H1 (cell line): ENCODE measurements at regions of chr5 and their contacts with region 1.

Region 1: DNA sequence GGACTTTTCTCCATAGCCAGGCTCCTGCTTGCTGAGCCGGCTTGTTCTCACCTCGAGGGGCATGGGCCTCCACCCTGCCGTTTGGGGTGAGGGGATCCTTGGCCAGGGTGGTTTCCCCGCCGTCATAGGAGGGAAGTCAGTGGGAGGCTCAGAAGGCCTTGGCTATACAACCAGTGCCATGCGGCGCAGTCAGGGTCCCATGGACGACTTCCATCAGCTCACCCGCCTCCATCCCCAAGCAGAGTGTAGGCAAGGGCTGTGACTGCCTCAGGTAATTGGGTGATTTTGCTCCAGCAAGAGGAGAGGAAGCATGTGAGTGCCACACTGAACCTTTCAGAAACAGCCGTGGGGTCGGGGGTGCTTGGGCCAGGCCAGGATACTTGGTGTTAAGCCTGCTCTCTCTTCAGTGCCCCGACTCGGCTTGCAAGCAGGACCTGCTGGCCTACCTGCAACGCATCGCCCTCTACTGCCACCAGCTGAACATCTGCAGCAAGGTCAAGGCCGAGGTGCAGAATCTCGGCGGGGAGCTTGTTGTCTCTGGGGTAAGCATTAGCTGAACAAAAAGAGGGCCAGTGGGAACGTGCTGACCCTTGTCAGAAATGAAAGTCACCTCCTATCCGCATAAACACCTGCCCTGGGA is 57.2 kb upstream of the LRRTM2 start:
- DNase-seq: no peak
- H3K4me3 ChIP-seq: no peak overlapping the region
- H3K27ac ChIP-seq: no peak overlapping the region
- H3K4me1 ChIP-seq: peaks cover 0 to 14% (median 5%) of the 10 kb centered on the region in 4 experiments; a peak in 5 of 7 replicates
- H3K27me3 ChIP-seq: no peaks in the 10 kb centered on the region
- CTCF ChIP-seq: peak; percentile 77 to 93 (median 86)
- EP300 ChIP-seq: no peak
- POLR2A ChIP-seq: no peak
- RAD21 ChIP-seq: peak; percentile 76 to 86

Region 2: DNA sequence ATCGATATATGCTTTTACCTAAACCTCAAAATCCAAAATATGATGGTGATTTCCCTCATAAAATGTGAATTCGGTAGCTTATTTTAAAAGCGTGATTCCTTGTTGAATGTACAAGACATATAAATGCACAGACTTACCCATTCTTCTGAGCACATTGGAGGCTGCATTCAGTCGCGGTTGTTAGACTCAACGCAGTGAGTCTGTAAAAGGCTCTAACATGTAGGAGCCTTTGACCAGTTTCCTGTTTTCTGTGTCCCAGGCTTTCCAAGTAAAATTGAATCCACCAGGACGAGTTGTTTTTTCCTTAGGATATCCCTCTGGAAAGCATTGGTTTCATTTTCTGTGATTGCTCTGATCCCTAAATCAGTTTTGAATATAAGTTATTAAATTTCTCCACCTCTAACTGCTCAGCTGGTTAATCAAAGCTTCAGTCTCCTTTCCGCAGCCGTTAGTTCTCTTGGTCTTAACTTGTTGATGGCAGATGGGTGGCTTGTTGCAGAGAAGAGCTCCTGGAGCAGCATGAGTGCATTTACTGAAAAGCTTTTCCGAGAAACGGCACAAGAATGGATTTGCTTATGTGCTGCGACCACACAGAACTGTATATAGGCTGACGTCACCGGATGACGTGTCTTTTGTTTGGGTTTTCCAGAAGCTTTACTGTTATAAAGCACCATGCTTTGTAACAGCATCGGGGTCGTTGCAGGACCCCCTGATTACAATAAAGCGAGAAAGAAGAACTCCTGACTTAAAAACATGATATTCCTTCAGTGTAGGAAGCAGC is 57.3 kb before region 1 on chr5 and contains the start of gene LRRTM2:
- CTCF ChIA-PET with region 1: interaction called, 11 read pairs
- POLR2A ChIA-PET with region 1: no interaction called
- DNase-seq: no peak
- H3K4me3 ChIP-seq: no peak within 1 kb of the TSS; a peak in 1 of 8 replicates
- H3K27ac ChIP-seq: no peak within 1 kb of the TSS
- H3K4me1 ChIP-seq: peaks cover 3 to 26% (median 23%) of the 10 kb centered on the region in 4 experiments; a peak in 5 of 7 replicates
- H3K27me3 ChIP-seq: no peaks in the 10 kb centered on the region
- CTCF ChIP-seq: no peak
- EP300 ChIP-seq: no peak
- POLR2A ChIP-seq: no peak
- RAD21 ChIP-seq: no peak
- total RNA-seq, gene LRRTM2: not detected in 2 replicates

Region 3: GRCh38 chr5:138945421-138946240 is 13.3 kb after region 1 on chr5:
- CTCF ChIA-PET with region 1: interaction called, 11 read pairs
- POLR2A ChIA-PET with region 1: interaction called, 3 read pairs
- DNase-seq: no peak
- H3K4me3 ChIP-seq: no peak overlapping the region
- H3K27ac ChIP-seq: no peak overlapping the region
- H3K4me1 ChIP-seq: peaks cover 0 to 24% (median 11%) of the 10 kb centered on the region in 4 experiments; a peak in 6 of 7 replicates
- H3K27me3 ChIP-seq: no peaks in the 10 kb centered on the region
- CTCF ChIP-seq: peak in 1 of 3 experiments; percentile 30; a peak in 1 of 4 replicates
- EP300 ChIP-seq: no peak
- POLR2A ChIP-seq: no peak
- RAD21 ChIP-seq: peak; percentile 20; a peak in 2 of 4 replicates

Region 4: GRCh38 chr5:138989720-138990119 is 57.4 kb after region 1 on chr5:
- CTCF ChIA-PET with region 1: no interaction called
- POLR2A ChIA-PET with region 1: no interaction called
- DNase-seq: peak in 1 of 2 experiments; percentile 26
- H3K4me3 ChIP-seq: no peak overlapping the region
- H3K27ac ChIP-seq: no peak overlapping the region
- H3K4me1 ChIP-seq: no peaks in the 10 kb centered on the region
- H3K27me3 ChIP-seq: no peaks in the 10 kb centered on the region
- CTCF ChIP-seq: no peak
- EP300 ChIP-seq: no peak
- POLR2A ChIP-seq: no peak
- RAD21 ChIP-seq: no peak